ENCODE measurements at regions of chr14 and their contacts with region 1.

Region 1: DNA sequence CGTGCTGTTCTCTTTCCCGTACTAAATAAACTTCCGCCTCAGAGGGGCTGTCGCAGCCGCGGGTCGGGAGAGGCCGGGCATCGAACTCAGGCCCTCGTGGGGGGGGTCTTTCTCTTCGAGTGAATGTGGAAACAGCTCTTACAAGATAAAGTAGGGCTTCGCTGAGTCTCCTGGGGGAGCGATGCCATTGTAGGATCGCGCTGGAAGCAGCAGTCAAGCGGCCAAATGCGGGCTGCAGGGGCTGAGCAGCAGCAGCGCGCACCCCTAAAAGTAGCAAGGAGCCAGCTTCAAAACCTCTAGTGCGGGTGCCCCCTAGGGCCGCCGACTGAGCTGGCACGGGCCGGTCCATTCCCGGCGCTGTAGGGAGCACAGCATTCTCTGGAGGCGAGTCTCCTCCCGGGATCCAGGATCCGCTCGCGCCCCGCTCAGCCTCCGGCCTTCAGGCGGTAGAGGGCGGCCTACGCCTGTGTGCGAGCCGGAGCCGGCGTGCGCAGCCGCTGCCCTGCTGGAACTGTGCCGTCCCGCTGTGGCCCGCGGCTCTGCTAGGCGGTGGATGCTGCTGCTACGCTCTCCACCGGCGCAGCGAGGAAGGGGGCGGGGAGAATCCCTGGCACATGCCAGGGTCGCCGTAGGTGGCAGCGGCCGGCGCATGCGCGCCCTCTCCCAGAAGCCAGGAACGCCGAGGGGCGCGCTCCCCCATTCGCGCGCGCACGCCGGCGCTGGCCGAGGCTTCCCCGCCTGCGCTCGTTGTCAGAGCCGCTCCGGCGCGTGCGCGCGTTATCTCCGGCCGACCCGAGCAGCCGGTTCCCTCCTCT is at the start of gene FUT8:
- DNase-seq: peak; percentile 90 to 95
- ATAC-seq: peak; percentile 77 to 83
- H3K4me3 ChIP-seq: peak within 1 kb of the TSS; percentile 79 to 98 (median 94)
- H3K27ac ChIP-seq: peak within 1 kb of the TSS; percentile 82 to 93 (median 90)
- H3K4me1 ChIP-seq: peaks cover 4 to 8% of the 10 kb centered on the region in 2 donors
- H3K27me3 ChIP-seq: no peaks in the 10 kb centered on the region
- CTCF ChIP-seq: peak; percentile 42 to 78 (median 58)
- POLR2A ChIP-seq: peak; percentile 50 to 55
- total RNA-seq, gene FUT8: 6.5 to 11.3 (median 9.3) TPM

Region 2: DNA sequence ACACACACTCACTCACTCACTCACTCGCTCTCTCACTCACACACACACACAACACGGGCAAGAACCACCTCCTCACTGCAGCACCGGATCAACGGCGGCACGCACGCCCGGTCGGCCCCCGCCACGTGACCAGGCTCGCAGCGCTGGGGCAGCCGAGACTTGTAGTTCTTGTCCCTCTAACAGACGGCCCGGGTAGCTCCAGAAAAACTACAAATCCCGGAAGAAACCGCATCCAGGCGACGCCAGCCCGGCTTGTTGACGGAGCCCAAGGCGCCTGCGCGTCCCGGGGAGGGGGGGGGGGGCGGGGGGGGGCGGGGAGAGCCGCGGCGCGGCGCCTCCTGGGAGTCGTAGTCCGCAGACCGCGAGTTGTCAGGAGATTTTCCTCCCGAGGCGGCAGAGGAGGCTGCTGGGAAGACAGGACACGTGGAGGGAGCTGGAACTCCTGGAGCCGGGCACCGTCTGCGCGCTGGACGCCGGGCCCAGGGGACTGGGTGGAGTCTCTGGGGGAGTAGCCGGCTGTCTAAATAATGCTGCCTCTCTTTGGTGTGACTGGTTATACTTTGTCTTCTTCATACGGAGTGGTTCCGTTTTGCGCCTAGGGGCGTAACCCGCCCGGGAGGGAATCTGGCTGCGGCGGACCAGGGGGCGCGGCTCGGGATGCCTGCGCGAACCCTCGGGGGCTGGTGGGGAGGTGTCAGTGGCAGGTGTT is 309.6 kb before region 1 on chr14 and contains the start of gene MAX:
- in situ Hi-C with region 1: no loop called
- intact Hi-C with region 1: loop called (anchors 5 kb)
- DNase-seq: peak; percentile 99
- ATAC-seq: peak; percentile 88 to 90
- H3K4me3 ChIP-seq: peak within 1 kb of the TSS; percentile 85 to 98 (median 96)
- H3K27ac ChIP-seq: peak within 1 kb of the TSS; percentile 96 to 98 (median 98)
- H3K4me1 ChIP-seq: peaks cover 37% of the 10 kb centered on the region in 2 donors
- H3K27me3 ChIP-seq: no peaks in the 10 kb centered on the region
- CTCF ChIP-seq: no peak
- POLR2A ChIP-seq: peak; percentile 83 to 93
- total RNA-seq, gene MAX: 27.5 to 50.0 (median 37.2) TPM

Region 3: DNA sequence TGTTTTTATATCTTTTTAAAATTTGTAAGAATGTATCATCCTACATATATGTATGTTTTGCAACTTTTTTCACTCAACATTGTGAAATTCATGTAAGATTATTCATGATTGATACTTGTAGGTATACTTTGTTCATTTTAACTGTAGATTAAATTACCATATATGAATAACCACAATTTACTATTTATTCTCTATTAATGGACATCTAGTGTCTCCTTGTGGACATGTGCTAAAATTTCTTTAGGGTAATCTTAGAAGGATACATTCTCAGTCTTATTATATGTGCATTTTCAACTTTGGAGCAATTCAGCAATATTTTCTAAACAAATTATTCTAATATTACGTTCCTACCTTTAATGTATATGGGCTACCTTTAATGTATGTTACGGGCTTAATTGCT is 192.7 kb after region 1 on chr14:
- in situ Hi-C with region 1: no loop called
- intact Hi-C with region 1: loop called (anchors 10 kb)
- DNase-seq: no peak
- ATAC-seq: no peak
- H3K4me3 ChIP-seq: no peak overlapping the region
- H3K27ac ChIP-seq: no peak overlapping the region
- H3K4me1 ChIP-seq: no peaks in the 10 kb centered on the region
- H3K27me3 ChIP-seq: no peaks in the 10 kb centered on the region
- CTCF ChIP-seq: peak in 1 of 5 experiments; percentile 11
- POLR2A ChIP-seq: no peak

Region 4: GRCh38 chr14:65958664-65959562 is 546.7 kb after region 1 on chr14:
- in situ Hi-C with region 1: loop called in 1 of 4 experiments (anchors 25 kb)
- intact Hi-C with region 1: no loop called
- DNase-seq: no peak
- ATAC-seq: peak in 1 of 2 donors; percentile 51
- H3K4me3 ChIP-seq: no peak overlapping the region
- H3K27ac ChIP-seq: no peak overlapping the region
- H3K4me1 ChIP-seq: no peaks in the 10 kb centered on the region
- H3K27me3 ChIP-seq: no peaks in the 10 kb centered on the region
- CTCF ChIP-seq: peak in 2 of 5 experiments; percentile 40 to 41
- POLR2A ChIP-seq: no peak